ENCODE measurements at regions of chr4 and their contacts with region 1.

Region 1: DNA sequence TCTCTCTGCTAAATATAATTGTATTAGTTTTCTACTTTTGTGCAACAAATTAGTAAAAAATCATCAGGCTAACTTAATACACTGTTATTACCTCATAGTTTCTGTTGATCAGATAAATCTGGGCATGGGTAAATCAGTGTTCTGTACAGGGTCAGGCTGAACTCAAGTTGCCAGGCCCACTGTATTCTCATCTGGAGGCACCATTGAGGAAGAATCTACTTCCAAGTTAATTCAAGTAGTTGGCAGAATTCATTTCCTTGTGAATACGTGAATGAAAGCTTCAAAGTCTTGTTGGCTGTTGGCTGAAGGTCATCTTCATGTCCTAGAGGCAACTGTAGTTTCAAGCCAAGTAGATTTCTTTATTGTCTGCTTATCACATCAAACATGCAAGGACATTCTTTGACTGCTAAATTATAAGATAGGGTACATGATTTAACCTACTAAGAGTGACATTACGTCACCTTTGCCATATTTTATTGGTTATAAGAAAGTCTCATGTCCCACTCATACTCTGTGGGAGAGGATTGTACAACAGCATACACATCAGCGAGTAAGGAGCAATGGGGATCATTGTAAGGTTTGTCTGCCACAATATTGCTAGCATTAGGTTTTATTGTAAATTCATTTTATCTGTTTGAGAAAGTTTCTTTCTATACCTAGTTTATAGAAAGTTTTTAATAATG is 1219.0 kb downstream of the ARAP2 start:
- DNase-seq: no peak
- H3K4me3 ChIP-seq: no peak overlapping the region
- H3K27ac ChIP-seq: no peak overlapping the region
- H3K4me1 ChIP-seq: no peaks in the 10 kb centered on the region
- H3K27me3 ChIP-seq: no peaks in the 10 kb centered on the region
- CTCF ChIP-seq: no peak
- POLR2A ChIP-seq: no peak

Region 2: GRCh38 chr4:34850968-34851367 is 174.3 kb before region 1 on chr4:
- CTCF ChIA-PET with region 1: no interaction called
- POLR2A ChIA-PET with region 1: no interaction called
- dilution Hi-C with region 1: no loop called
- intact Hi-C with region 1: no loop called
- DNase-seq: no peak
- H3K4me3 ChIP-seq: no peak overlapping the region
- H3K27ac ChIP-seq: no peak overlapping the region
- H3K4me1 ChIP-seq: no peaks in the 10 kb centered on the region
- H3K27me3 ChIP-seq: no peaks in the 10 kb centered on the region
- CTCF ChIP-seq: no peak
- POLR2A ChIP-seq: no peak

Region 3: DNA sequence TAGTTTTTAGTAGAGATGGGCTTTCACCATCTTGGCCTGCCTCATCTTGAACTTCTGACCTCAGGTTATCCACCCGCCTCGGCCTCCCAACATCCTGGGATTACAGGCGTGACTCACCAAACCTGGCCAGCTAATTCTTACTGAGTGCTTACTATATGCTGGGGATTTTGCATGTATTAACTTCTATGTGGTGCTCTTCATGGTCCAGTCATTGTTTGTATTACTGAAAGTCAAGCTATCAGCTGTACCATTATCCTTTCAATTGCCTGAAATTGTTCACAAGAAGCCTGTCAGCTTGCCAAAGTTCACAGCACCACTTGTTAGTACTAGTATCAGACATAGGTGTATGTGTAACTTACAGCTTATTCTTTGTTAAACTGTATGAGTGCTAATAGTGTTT is 53.1 kb before region 1 on chr4:
- CTCF ChIA-PET with region 1: no interaction called
- POLR2A ChIA-PET with region 1: no interaction called
- dilution Hi-C with region 1: no loop called
- intact Hi-C with region 1: loop called (anchors 2 kb)
- DNase-seq: no peak
- H3K4me3 ChIP-seq: no peak overlapping the region
- H3K27ac ChIP-seq: no peak overlapping the region
- H3K4me1 ChIP-seq: no peaks in the 10 kb centered on the region
- H3K27me3 ChIP-seq: no peaks in the 10 kb centered on the region
- CTCF ChIP-seq: no peak
- POLR2A ChIP-seq: no peak